Activated CD4-positive, alpha-beta T cell treated with anti-CD3 and anti-CD28 coated beads for 36 hours (primary cell): ENCODE measurements at regions of chr1 and their contacts with region 1.

Region 1: DNA sequence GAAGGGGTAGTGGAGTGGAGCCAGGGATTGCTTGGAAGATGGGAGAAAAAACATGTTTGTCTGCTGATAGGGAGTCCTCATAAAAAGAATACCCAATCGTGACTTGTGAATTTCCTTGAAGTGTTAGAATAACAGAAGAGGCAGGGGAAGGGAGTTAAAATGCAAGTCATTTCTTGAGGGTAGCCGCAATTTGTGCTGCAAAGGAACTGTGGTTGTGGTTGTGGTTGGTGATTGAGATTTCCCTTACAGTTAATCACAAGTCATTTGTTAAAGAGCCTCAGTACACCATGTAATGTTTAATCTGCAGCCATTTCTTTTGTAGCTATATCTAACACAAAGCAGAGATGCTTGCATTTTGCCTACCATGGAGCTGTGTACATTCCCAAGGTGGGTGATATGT is 38.5 kb upstream of the EGLN1 start:
- DNase-seq: peak; percentile 77
- ATAC-seq: peak; percentile 66
- H3K4me3 Mint-ChIP-seq: peak overlapping the region; percentile 36
- H3K27ac Mint-ChIP-seq: no peak overlapping the region
- H3K4me1 Mint-ChIP-seq: peaks cover 24% of the 10 kb centered on the region
- H3K27me3 Mint-ChIP-seq: peaks cover 57% of the 10 kb centered on the region

Region 2: GRCh38 chr1:231376875-231377549 is 83.6 kb before region 1 on chr1:
- CTCF ChIA-PET with region 1: no interaction called
- POLR2A ChIA-PET with region 1: no interaction called
- intact Hi-C with region 1: loop called in 1 of 2 experiments (anchors 5 kb)
- DNase-seq: peak; percentile 48
- ATAC-seq: peak; percentile 89
- H3K4me3 Mint-ChIP-seq: no peak overlapping the region
- H3K27ac Mint-ChIP-seq: peak overlapping the region; percentile 68
- H3K4me1 Mint-ChIP-seq: peaks cover 38% of the 10 kb centered on the region
- H3K27me3 Mint-ChIP-seq: no peaks in the 10 kb centered on the region

Region 3: GRCh38 chr1:231431665-231432415 is 28.8 kb before region 1 on chr1:
- CTCF ChIA-PET with region 1: no interaction called
- POLR2A ChIA-PET with region 1: no interaction called
- intact Hi-C with region 1: no loop called
- DNase-seq: no peak
- ATAC-seq: no peak
- H3K4me3 Mint-ChIP-seq: no peak overlapping the region
- H3K27ac Mint-ChIP-seq: no peak overlapping the region
- H3K4me1 Mint-ChIP-seq: no peaks in the 10 kb centered on the region
- H3K27me3 Mint-ChIP-seq: peaks cover 16% of the 10 kb centered on the region

Region 4: DNA sequence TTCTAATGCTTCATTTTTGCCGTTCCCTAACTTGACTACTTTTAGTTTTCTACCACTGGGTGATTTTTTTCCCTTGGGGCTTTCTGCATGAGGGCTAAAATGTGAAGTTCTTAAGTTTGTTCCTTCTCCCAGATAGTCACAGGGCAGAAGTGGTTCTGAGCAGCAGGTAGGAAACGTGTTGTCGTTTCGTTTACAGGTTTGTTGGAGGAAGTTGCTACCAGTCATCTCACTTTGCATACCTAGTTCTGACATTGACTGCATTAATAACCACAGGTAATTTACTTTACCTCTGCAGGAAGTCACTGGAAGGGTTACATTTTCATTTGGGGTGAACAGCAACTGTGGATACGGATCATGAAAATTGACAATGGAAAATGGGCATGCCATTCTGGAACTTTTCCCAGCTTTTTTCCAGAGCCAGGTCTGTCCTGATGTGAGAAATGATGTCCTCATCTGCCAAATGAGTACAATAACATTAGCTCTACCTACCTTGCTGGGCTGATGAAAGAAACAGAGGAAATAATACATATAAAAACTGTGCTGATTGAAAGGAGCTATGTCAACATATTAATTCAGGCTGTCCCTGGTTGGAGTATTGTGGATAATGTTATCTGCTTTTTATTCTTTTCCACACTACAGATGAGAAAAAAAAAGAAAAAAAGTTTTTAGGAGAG is 260.2 kb after region 1 on chr1:
- CTCF ChIA-PET with region 1: no interaction called
- POLR2A ChIA-PET with region 1: no interaction called
- intact Hi-C with region 1: no loop called
- DNase-seq: no peak
- ATAC-seq: no peak
- H3K4me3 Mint-ChIP-seq: no peak overlapping the region
- H3K27ac Mint-ChIP-seq: no peak overlapping the region
- H3K4me1 Mint-ChIP-seq: no peaks in the 10 kb centered on the region
- H3K27me3 Mint-ChIP-seq: no peaks in the 10 kb centered on the region

Region 5: DNA sequence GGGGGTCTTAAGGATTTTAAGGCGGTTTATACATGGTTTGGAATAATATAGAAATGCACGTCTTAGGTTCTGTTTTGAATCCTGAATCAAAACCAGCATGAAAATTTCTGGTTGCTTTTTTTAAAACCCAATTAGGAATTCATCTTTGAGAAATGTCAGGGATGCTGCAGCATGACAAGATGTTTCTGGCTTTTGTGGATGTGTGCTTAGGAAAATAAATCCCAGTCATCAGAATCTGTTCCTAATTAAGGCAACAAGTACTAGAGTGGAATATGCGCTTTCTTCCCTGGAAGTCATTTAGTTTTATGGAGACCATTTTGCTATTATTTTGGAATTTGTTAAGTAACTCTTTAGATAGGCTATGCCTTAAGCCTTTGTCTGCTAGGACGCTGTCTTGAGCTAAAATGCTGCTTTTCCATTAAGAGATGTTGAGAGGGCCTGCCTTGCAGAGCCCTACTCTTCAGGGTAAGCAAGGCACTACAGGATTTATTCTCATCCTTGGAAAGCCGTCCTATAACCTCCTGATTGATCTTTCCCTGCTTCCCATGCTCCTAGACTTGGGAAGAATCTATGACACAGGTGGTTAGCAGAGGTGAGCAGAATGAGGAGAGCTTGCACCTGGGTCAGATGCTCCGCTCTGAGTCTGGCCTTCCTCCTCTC is 498.7 kb after region 1 on chr1:
- CTCF ChIA-PET with region 1: no interaction called
- POLR2A ChIA-PET with region 1: interaction called, 11 read pairs
- intact Hi-C with region 1: no loop called
- DNase-seq: no peak
- ATAC-seq: no peak
- H3K4me3 Mint-ChIP-seq: no peak overlapping the region
- H3K27ac Mint-ChIP-seq: no peak overlapping the region
- H3K4me1 Mint-ChIP-seq: no peaks in the 10 kb centered on the region
- H3K27me3 Mint-ChIP-seq: no peaks in the 10 kb centered on the region